ENCODE measurements at regions of chr15 and their contacts with region 1.

Region 1: DNA sequence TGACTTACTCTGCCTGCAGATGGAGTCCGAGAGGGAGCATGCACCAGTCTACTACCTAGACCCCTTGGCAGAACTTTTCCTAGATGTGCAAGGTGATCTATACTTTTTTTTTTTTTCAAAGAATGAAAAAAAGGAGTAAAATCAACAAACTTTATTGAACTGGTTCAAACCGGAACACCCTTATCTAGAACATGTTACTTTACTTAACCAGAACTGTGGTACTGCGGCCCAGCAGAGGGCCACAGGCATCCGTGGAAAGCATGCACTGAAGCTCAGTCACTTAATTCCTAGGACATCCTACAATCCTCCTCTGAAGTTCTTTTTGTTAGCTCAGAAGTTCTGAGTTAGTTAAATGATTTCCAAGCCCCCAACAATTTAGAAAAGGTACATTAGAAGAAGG is 21.6 kb downstream of the CHAC1 start:
- DNase-seq: no peak
- H3K4me3 ChIP-seq: no peak overlapping the region
- H3K27ac ChIP-seq: no peak overlapping the region
- H3K4me1 ChIP-seq: peaks cover 7% of the 10 kb centered on the region
- H3K27me3 ChIP-seq: no peaks in the 10 kb centered on the region
- CTCF ChIP-seq: no peak

Region 2: DNA sequence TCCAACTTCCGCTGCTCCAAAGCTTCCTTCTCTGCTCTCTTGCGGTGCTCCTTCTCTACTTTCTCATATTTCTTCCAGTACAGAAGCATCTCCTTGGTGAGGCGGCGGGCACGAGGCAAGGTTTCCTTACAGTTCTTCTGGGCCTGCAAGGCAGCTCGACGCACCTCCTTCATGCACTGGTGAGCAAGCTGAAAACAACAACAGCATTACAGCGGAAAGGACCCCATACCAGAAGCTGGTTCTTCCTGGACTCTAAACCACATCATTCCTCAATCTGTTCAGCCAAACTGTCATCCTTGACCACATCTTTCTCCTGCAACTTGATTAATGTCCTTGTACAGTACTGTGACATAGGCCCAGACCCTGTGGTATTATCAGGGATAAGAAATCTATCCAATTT is 104.8 kb after region 1 on chr15:
- CTCF ChIA-PET with region 1: no interaction called
- dilution Hi-C with region 1: loop called (anchors 5 kb)
- in situ Hi-C with region 1: no loop called
- intact Hi-C with region 1: no loop called
- DNase-seq: no peak
- H3K4me3 ChIP-seq: no peak overlapping the region
- H3K27ac ChIP-seq: no peak overlapping the region
- H3K4me1 ChIP-seq: no peaks in the 10 kb centered on the region
- H3K27me3 ChIP-seq: no peaks in the 10 kb centered on the region
- CTCF ChIP-seq: no peak

Measured in mammary epithelial cell (primary cell).